MCF 10A (cell line): ENCODE measurements at regions of chr5 and their contacts with region 1.

Region 1: DNA sequence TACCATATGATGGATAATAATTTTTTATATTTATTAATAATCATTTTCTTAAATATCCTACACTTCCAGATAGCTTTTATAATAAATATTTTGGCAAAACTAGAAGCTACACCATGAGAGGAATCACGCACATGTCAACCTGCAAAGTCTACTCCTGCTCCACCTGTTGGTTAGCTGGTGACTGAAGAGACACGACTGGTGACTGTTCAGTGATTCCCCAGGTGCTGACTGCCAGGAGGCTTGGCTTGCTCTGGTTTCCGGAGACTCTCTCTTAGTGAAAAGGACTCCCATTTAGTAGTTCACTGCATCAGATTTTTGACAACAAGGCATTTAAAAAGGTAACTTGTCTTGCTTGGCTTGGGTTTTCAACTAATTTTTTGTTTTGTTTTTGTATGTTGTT is 20.9 kb downstream of the GZMA start:
- DNase-seq: no peak
- H3K4me3 Mint-ChIP-seq: no peak overlapping the region
- H3K27ac Mint-ChIP-seq: no peak overlapping the region
- H3K4me1 Mint-ChIP-seq: no peaks in the 10 kb centered on the region
- H3K27me3 Mint-ChIP-seq: peaks cover 74% of the 10 kb centered on the region
- CTCF ChIP-seq: no peak

Region 2: GRCh38 chr5:55146543-55147151 is 23.3 kb after region 1 on chr5:
- CTCF ChIA-PET with region 1: interaction called, 11 read pairs
- POLR2A ChIA-PET with region 1: no interaction called
- intact Hi-C with region 1: no loop called
- DNase-seq: peak; percentile 90
- H3K4me3 Mint-ChIP-seq: no peak overlapping the region
- H3K27ac Mint-ChIP-seq: no peak overlapping the region
- H3K4me1 Mint-ChIP-seq: no peaks in the 10 kb centered on the region
- H3K27me3 Mint-ChIP-seq: peaks cover 63% of the 10 kb centered on the region
- CTCF ChIP-seq: peak; percentile 89